ENCODE measurements at regions of chr2 and their contacts with region 1.

Region 1: GRCh38 chr2:84741296-84741765 is 139.6 kb downstream of the TRABD2A start:
- DNase-seq: no peak
- ATAC-seq: peak; percentile 100
- H3K4me3 ChIP-seq: no peak overlapping the region
- H3K27ac ChIP-seq: no peak overlapping the region
- H3K4me1 ChIP-seq: no peaks in the 10 kb centered on the region
- H3K27me3 ChIP-seq: no peaks in the 10 kb centered on the region; a peak in 1 of 4 replicates
- CTCF ChIP-seq: peak; percentile 58 to 74 (median 59)
- EP300 ChIP-seq: no peak
- POLR2A ChIP-seq: no peak
- RAD21 ChIP-seq: peak; percentile 39; the same call in 1 of the 2 replicates

Region 2: DNA sequence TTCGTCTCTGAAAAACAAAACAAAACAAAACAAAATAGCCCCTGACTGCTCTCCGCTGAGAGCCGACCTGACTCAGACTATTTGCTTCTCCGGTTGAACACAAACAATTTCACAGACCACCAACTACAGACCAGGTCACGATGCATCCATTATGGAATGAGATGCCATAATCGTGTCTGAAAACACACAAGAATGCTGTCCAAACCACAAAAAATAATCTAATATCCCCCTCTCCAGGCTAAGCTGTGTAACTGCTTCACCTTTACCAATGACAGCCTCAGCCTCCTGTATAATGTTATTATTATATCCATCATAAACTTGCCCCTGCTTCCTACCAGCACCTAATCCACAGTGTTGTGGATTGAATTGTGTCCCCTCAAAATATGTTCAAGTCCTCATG is 110.3 kb before region 1 on chr2:
- CTCF ChIA-PET with region 1: no interaction called
- POLR2A ChIA-PET with region 1: no interaction called
- RAD21 ChIA-PET with region 1: no interaction called
- SMC1A ChIA-PET with region 1: no interaction called
- in situ Hi-C with region 1: no loop called
- intact Hi-C with region 1: no loop called
- DNase-seq: no peak
- ATAC-seq: peak; percentile 70
- H3K4me3 ChIP-seq: no peak overlapping the region
- H3K27ac ChIP-seq: no peak overlapping the region
- H3K4me1 ChIP-seq: no peaks in the 10 kb centered on the region
- H3K27me3 ChIP-seq: no peaks in the 10 kb centered on the region
- CTCF ChIP-seq: peak in 2 of 3 experiments; percentile 50 to 52; a peak in 3 of 6 replicates
- EP300 ChIP-seq: no peak
- POLR2A ChIP-seq: no peak
- RAD21 ChIP-seq: peak; percentile 60

Region 3: GRCh38 chr2:84856787-84857186 is 115.5 kb after region 1 on chr2:
- CTCF ChIA-PET with region 1: interaction called, 41 read pairs
- POLR2A ChIA-PET with region 1: no interaction called
- RAD21 ChIA-PET with region 1: interaction called, 8 read pairs
- SMC1A ChIA-PET with region 1: interaction called, 15 read pairs
- in situ Hi-C with region 1: no loop called
- intact Hi-C with region 1: no loop called
- DNase-seq: no peak
- ATAC-seq: peak; percentile 94
- H3K4me3 ChIP-seq: no peak overlapping the region
- H3K27ac ChIP-seq: no peak overlapping the region
- H3K4me1 ChIP-seq: no peaks in the 10 kb centered on the region
- H3K27me3 ChIP-seq: no peaks in the 10 kb centered on the region
- CTCF ChIP-seq: no peak
- EP300 ChIP-seq: no peak
- POLR2A ChIP-seq: no peak
- RAD21 ChIP-seq: no peak

Region 4: GRCh38 chr2:84865181-84865783 is 124.0 kb after region 1 on chr2:
- CTCF ChIA-PET with region 1: interaction called, 41 read pairs
- POLR2A ChIA-PET with region 1: no interaction called
- RAD21 ChIA-PET with region 1: interaction called, 7 read pairs
- SMC1A ChIA-PET with region 1: interaction called, 7 read pairs
- in situ Hi-C with region 1: no loop called
- intact Hi-C with region 1: loop called (anchors 2 kb)
- DNase-seq: no peak
- ATAC-seq: peak; percentile 87
- H3K4me3 ChIP-seq: no peak overlapping the region
- H3K27ac ChIP-seq: no peak overlapping the region
- H3K4me1 ChIP-seq: no peaks in the 10 kb centered on the region
- H3K27me3 ChIP-seq: no peaks in the 10 kb centered on the region
- CTCF ChIP-seq: peak; percentile 41 to 75 (median 61); a peak in 4 of 6 replicates
- EP300 ChIP-seq: no peak
- POLR2A ChIP-seq: no peak
- RAD21 ChIP-seq: peak; percentile 73